ENCODE measurements at regions of chr18 and their contacts with region 1.

Region 1: GRCh38 chr18:24704946-24705630 is 244.7 kb downstream of the HRH4 start:
- DNase-seq: no peak

Region 2: DNA sequence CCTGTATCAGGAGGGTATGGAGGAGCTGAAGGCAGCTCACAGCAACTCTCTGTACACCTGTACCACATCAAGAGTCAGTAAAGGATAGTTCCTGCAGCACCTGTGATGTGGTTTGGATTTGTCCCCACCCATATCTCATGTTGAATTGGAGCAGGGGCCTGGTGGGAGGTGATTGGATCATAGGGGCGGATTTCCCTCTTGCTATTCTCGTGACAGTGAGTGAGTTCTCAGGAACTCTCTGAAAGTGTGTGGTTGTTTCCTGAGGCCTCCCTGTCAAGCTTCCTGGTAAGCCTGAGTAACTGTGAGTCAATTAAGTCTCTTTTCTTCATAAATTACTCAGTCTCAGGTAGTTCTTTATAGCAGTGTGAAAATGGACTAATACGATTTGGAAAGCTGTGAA is 336.3 kb before region 1 on chr18:
- in situ Hi-C with region 1: loop called (anchors 25 kb)
- DNase-seq: no peak

Region 3: DNA sequence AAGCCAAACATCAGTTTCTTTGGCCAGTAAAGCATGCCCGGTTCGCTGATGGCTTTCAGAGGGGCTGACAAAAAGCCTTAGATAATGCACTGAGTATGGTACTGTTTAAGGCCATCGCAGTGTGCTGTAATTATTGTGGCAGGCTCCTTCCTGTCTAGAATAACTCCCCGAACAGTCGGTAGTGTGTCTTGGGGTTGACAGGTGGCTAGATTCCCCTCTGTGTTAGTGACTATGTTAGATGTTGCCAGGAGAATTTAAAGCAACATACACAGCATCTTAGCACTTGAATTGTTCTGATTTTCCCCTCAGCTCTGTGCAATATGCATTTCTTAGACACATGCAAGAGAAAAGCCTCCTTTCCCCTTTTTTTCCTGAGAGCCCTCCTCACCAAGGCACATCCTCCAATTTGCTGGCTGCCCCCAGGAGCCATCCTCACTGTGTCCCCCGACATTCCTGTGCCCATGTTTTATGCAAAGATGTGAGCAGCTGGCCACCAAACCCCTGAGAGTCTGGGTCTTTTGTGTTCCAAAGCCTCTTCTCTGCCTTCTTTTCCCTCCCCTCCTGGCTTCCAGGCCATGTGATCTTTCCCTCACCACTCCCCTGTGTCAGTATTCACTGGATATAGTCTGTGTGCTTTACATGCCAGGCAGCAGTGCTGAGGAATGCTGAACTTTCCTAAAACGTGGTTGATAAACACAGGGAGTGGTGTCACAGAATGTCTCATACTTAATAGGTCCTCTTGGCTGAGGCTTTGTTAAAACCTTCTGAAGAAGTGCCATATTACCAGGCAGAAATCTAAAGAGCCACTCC is 86.9 kb after region 1 on chr18:
- in situ Hi-C with region 1: no loop called
- DNase-seq: no peak